ENCODE measurements at regions of chr12 and their contacts with region 1.

Region 1: GRCh38 chr12:6383572-6384498 is at the start of gene LTBR:
- DNase-seq: peak; percentile 99
- total RNA-seq, gene LTBR: 86.4 to 92.5 TPM

Region 2: GRCh38 chr12:5973461-5974130 is 410.2 kb before region 1 on chr12:
- intact Hi-C with region 1: no loop called
- DNase-seq: no peak

Region 3: DNA sequence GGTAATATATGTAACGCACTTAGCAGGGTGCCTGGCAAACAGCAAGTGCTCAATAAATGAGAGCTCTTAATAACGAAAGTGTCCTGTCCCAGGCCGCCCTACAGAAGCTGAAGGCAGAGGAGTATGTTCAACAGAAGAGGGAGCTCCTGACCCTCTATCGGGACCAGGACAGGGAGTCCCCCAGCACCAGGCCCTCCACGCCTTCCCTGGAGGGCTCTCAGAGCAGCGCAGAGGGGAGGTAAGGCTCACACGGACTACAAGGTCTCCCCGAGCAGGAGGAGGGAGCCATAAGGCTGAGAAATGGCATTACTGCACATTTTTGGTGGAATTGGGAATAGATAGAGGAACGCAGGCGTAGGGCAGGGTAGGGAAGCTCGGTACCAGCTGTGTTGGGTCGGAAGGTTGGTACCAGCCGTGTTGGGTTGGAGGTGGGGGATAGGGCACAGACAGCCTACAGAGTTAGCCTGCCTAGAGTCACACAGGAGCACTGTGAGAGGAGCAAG is 57.4 kb before region 1 on chr12:
- intact Hi-C with region 1: loop called in 1 of 2 experiments (anchors 5 kb)
- DNase-seq: no peak

Region 4: DNA sequence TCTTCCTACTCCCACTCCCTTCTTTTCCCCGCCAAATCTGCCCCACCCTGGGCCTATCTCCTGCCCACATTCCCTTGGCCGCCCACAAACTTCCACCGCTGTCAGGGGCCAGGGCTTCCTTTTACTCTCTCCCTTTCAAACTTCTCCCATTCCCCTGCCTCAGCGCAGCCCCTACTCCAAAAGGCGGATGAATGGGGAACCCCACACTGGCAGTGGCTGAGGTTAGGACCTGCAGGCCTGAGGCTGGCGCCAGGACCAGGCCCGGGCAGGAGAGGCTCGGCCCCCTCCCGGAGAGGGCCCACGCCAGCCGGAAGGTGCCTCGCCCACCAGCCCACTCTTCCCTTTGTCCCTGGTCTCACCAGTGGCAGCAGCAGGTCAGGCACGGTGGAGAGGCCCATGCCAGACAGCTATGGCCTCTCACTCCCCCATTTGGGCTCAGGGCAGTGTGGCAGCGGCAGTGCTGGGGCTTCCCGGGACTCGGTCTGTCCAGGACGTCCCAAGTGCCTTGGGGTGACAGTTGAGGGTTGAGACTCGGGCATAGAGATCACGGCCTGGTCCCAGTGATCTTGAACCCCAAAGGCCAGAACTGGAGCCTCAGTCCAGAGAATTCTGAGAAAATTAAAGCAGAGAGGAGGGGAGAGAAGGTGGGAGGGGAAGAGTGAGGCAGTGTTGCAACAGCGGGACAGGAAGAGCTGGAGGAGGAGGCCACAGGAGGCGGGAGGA is 42.3 kb before region 1 on chr12 and contains the start of gene TNFRSF1A:
- intact Hi-C with region 1: loop called (anchors 5 kb)
- DNase-seq: peak; percentile 93
- total RNA-seq, gene TNFRSF1A: 190 to 194 TPM

Region 5: DNA sequence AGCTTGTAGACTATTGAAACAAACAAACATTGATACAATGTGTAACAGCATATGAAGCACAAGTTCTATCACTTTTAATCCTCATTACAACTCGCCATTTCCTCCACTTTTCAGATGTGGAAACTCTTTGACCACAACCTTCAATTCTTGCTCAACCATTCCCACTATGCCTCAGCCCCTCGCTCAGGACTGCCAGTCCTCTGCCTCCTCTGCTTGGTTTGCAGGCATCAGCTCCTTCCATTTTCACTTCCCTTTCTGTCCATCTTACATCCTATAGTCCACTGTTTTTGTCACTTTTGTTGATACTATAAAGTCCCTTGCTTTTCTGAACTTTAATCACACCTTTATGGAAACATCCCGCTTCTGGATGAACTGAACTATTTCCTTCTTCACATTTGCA is 32.8 kb after region 1 on chr12:
- intact Hi-C with region 1: loop called in 1 of 2 experiments (anchors 2 kb)
- DNase-seq: no peak